ENCODE measurements at regions of chr12 and their contacts with region 1.

Region 1: GRCh38 chr12:127263621-127264020 is 1003.3 kb upstream of the TMEM132C start:
- H3K4me3 ChIP-seq: no peak overlapping the region
- H3K27ac ChIP-seq: no peak overlapping the region
- H3K4me1 ChIP-seq: no peaks in the 10 kb centered on the region
- CTCF ChIP-seq: no peak

Region 2: GRCh38 chr12:127165567-127166392 is 97.8 kb before region 1 on chr12:
- CTCF ChIA-PET with region 1: no interaction called
- POLR2A ChIA-PET with region 1: no interaction called
- H3K4me3 ChIP-seq: peak overlapping the region; percentile 36
- H3K27ac ChIP-seq: no peak overlapping the region
- H3K4me1 ChIP-seq: no peaks in the 10 kb centered on the region
- CTCF ChIP-seq: no peak

Region 3: DNA sequence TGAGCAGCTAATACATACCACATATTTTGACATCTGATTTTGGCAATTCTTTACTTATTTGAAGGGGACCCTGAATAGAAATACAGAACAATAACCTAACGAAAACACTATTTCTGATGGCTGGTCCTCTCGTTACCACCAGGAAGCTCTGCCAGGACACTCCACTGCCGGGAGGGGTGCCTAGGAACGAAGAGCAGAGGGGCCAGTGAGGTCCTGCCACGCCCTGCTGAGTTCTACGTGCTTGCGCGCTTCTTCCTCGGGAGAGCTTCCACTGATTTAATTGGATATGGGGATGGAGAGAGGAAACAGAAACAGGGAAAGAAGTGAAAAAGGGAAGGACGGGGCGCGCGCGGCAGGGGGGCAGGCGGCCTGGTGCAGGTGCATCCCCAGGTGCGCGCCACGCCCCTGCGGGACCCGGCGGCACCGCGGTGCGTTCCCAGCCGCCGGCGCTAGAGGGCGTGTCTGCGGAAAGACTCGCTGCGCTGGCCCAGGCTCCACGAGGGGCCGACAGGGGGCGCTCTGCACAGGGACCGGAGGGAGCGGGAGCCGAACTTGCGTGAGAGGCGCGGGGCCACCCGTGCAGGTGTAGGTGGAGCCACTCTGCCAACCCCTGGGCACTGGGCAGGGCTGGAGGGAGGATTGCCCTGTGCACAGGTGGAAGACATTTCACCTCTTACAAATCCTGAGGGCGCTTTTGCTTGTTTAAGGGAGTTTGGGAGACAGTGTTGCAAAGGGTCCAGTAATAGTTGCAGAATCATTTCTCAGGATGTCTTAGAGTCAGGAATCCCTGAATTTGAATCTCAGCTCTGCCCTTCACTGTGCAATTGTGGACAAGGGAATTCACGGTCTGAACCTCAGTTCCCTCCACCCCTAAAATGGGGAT is 17.0 kb after region 1 on chr12:
- CTCF ChIA-PET with region 1: interaction called, 20 read pairs
- POLR2A ChIA-PET with region 1: no interaction called
- H3K4me3 ChIP-seq: no peak overlapping the region
- H3K27ac ChIP-seq: no peak overlapping the region
- H3K4me1 ChIP-seq: no peaks in the 10 kb centered on the region
- CTCF ChIP-seq: peak; percentile 68; the same call in 1 of the 2 replicates